Calu3 (cell line): ENCODE measurements at regions of chr13 and their contacts with region 1.

Region 1: DNA sequence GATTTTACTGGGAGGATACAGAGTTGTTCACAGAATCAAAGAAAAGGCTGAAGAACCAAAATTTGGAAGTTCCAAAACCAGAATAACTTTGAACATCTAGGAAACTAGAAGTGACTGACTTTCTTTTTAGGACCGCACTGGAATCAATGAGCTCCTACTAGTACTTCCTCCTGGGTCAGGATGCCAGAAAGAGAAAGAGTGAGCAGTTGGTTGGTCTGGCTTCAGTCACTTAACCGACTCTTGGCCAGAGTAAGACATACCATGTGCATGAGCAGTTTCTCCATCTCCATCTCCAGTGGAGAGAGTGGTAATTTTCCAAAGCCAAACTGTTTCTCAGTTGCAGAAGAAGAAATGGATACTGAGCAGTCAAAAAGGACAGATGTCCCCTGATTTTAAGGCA is 27.1 kb upstream of the MTUS2 start:
- DNase-seq: no peak
- H3K4me3 Mint-ChIP-seq: no peak overlapping the region
- H3K27ac Mint-ChIP-seq: no peak overlapping the region
- H3K4me1 Mint-ChIP-seq: no peaks in the 10 kb centered on the region
- H3K27me3 Mint-ChIP-seq: peaks cover 33% of the 10 kb centered on the region
- CTCF ChIP-seq: no peak

Region 2: DNA sequence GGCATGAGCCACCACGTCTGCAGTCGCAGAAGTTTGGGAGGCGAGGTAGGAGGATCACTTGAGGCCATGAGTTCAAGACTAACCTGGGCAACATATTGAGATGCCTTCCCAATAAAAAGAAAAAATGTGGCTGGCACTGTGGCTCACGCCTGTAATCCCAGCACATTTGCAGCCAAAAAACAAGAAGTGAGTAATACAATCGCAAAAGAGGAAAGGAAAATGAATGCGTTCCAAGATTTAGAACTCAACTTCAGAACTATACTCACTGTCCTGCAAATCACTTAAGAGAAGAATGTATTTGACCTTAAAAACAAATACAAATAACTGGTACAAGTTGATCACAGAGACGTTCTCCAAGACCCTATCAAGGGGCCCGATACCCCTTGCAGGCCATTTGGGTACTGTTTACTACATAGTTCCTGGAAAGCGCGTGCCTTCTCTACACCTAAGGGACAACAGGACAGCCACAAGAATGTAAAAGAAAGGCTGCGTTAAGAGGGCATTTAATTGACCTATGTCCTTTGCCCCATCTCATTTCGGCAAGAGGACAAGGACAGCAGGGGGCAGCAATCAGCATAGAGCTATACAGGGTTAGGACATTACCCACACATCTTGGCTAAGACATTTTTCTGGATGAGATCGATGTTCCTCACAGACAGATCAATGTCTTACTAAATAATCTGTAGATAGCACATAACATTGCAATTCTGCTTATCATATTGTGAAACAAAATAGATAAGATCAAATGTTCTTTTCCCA is 733.9 kb before region 1 on chr13:
- CTCF ChIA-PET with region 1: interaction called, 4 read pairs
- intact Hi-C with region 1: loop called (anchors 10 kb)
- DNase-seq: peak; percentile 48
- H3K4me3 Mint-ChIP-seq: no peak overlapping the region
- H3K27ac Mint-ChIP-seq: no peak overlapping the region
- H3K4me1 Mint-ChIP-seq: no peaks in the 10 kb centered on the region
- H3K27me3 Mint-ChIP-seq: peaks cover 8% of the 10 kb centered on the region
- CTCF ChIP-seq: peak; percentile 36

Region 3: GRCh38 chr13:28313579-28313978 is 479.4 kb before region 1 on chr13:
- CTCF ChIA-PET with region 1: no interaction called
- intact Hi-C with region 1: loop called (anchors 5 kb)
- DNase-seq: no peak
- H3K4me3 Mint-ChIP-seq: no peak overlapping the region
- H3K27ac Mint-ChIP-seq: no peak overlapping the region
- H3K4me1 Mint-ChIP-seq: no peaks in the 10 kb centered on the region
- H3K27me3 Mint-ChIP-seq: no peaks in the 10 kb centered on the region
- CTCF ChIP-seq: no peak

Region 4: DNA sequence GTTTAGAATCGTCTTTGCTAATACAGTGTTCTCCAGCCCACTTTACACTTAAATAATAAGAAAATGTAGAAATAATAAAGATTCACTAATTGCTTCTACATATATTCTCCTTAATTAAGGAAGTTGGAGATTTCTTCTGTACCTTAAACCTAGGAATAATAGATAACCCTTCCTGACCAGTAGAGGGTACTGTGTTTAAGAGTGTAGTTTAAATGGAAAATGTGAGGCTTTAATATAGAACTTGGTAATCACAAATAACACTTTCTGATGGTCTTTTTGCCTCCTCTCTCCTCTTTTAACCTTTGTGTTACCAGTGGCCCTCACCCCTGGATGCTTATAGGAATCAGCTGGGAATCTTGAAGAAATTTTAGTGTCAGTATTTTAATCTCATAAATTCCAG is 113.4 kb before region 1 on chr13:
- CTCF ChIA-PET with region 1: interaction called, 5 read pairs
- intact Hi-C with region 1: loop called (anchors 1 kb)
- DNase-seq: no peak
- H3K4me3 Mint-ChIP-seq: no peak overlapping the region
- H3K27ac Mint-ChIP-seq: no peak overlapping the region
- H3K4me1 Mint-ChIP-seq: no peaks in the 10 kb centered on the region
- H3K27me3 Mint-ChIP-seq: no peaks in the 10 kb centered on the region
- CTCF ChIP-seq: no peak

Region 5: DNA sequence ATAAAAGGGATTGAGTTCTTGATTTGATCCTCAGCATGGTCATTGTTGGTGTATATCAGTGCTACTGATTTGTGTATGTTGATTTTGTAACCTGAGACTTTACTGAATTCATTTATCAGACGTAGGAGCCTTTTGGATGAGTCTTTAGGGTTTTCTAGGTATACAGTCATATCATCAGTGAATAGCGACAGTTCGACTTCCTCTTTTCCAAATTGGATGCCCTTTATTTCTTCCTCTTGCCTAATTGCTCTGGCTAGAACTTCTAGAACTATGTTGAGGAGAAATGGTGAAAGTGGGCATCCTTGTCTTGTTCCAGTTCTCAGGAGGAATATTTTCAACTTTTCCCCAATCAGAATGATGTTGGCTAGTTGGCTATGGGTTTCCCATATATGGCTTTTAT is 107.1 kb before region 1 on chr13:
- CTCF ChIA-PET with region 1: no interaction called
- intact Hi-C with region 1: loop called (anchors 5 kb)
- DNase-seq: no peak
- H3K4me3 Mint-ChIP-seq: no peak overlapping the region
- H3K27ac Mint-ChIP-seq: no peak overlapping the region
- H3K4me1 Mint-ChIP-seq: no peaks in the 10 kb centered on the region
- H3K27me3 Mint-ChIP-seq: peaks cover 7% of the 10 kb centered on the region
- CTCF ChIP-seq: no peak

Region 6: GRCh38 chr13:28922341-28922740 is 129.3 kb after region 1 on chr13:
- CTCF ChIA-PET with region 1: no interaction called
- intact Hi-C with region 1: no loop called
- DNase-seq: no peak
- H3K4me3 Mint-ChIP-seq: no peak overlapping the region
- H3K27ac Mint-ChIP-seq: no peak overlapping the region
- H3K4me1 Mint-ChIP-seq: no peaks in the 10 kb centered on the region
- H3K27me3 Mint-ChIP-seq: no peaks in the 10 kb centered on the region
- CTCF ChIP-seq: no peak